ENCODE measurements at regions of chr3 and their contacts with region 1.

Region 1: DNA sequence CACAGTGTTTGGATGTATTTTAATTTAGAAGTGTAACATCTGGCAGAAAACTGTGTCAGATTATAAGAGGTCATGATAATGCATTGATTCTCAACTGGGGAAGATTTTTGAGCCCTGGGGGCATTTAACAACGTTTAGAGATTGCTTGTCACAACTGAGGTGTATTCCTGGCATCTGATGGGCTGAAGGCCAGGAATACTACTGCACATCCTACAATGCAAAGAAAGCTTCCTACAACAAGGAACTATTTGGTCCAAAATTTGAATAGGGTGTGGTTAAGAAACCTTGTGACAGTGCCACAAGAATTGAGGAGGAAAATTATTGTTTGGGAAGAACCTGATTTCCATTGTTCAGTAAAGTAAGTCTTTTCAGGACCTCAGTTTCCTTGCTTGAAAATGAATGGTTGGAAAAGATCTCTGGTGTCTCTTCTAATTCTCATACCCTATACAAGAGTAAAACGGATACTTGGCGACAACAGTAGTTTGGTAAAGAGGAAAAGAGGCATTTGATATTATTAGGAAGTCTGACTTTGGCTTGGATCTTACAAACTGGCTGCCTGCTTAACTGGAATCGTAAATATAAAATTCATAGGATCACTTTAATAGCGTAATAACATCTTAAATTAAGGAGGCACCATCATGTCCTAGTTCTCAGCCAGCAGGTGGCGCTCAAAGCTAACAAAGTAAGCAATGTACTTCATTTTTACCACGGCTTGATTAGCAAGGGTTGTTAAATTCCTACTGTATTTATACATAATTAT is 4.3 kb downstream of the DAZL start:
- DNase-seq: peak; percentile 87
- H3K4me3 ChIP-seq: no peak overlapping the region
- H3K27ac ChIP-seq: no peak overlapping the region
- H3K4me1 ChIP-seq: no peaks in the 10 kb centered on the region
- CTCF ChIP-seq: peak; percentile 99

Region 2: DNA sequence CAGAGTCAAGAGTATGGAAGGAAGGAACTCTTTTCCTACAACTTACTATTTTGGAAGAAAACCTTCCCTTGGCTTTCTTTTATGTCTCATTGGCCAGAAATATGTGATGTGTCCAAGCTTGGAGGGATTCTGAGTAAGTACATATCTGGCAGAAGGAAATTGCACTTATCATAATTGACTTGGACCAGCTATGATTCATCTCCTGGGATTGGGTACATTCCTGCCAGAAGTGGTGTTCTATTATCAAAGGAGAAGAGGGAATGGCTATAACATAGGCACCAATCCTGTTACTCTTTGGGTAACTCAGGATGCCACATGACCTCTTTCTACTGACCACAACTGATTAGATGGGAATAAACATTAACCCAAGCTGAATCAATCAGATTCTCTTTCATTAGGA is 17.8 kb after region 1 on chr3:
- CTCF ChIA-PET with region 1: no interaction called
- POLR2A ChIA-PET with region 1: no interaction called
- intact Hi-C with region 1: no loop called
- DNase-seq: no peak
- H3K4me3 ChIP-seq: no peak overlapping the region
- H3K27ac ChIP-seq: no peak overlapping the region
- H3K4me1 ChIP-seq: no peaks in the 10 kb centered on the region
- CTCF ChIP-seq: no peak

Region 3: DNA sequence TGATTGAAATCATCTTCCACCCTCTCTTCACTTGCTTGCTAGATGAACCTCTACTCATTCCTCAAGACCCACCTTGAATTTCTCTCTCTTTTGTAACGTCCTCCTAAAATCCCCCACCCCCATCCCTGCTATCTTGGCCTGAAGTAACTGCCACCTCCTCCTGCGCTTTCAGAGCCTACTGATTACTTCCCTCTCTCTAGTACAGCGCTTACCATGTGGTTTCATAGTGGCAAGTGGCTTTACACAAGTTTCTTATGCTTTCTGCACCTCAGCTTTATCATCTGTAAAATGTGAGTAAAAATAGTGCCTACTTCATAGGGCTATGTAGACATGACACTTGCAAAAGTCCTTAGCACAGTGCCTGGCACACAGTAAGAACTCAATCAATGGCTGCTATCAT is 33.0 kb after region 1 on chr3:
- CTCF ChIA-PET with region 1: no interaction called
- POLR2A ChIA-PET with region 1: no interaction called
- intact Hi-C with region 1: no loop called
- DNase-seq: no peak
- H3K4me3 ChIP-seq: no peak overlapping the region
- H3K27ac ChIP-seq: no peak overlapping the region
- H3K4me1 ChIP-seq: no peaks in the 10 kb centered on the region
- CTCF ChIP-seq: no peak

Region 4: DNA sequence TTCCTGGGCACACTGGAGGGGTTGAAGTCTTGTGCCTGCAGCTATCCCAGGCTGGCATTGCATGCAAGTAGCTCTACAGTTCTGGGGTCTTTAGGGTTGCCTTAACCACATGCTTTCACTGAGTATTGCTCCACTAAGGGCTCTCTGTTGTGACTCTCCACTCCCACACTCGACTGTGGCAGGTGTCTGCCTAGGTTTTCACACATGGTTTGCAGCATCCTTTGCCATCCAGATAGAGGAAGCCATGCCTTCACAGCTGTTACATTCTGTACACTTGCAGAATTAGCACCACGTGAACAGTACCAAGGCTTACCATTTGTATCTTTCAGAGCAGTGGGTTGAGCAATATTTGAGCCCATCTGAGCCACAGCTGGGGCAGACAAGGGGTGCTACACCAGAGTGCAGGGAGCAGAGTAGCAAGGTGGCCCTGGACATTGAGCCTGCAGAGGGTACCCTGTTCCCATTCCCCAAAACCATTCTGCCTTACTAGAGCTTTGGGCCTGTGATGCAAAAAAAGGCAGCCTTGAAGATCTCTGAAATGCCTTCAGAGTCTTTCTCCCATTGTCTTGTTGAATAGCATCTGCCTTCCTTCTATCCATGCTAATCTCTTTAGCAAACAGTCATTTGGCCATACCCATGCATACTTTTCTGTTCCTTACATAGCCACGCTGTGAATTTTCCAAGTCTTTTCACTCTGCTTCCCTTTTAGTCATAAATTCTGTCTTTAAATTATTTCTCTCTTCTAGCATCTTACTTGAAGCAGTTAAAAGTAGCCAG is 188.6 kb after region 1 on chr3:
- CTCF ChIA-PET with region 1: no interaction called
- POLR2A ChIA-PET with region 1: no interaction called
- intact Hi-C with region 1: no loop called
- DNase-seq: peak; percentile 14
- H3K4me3 ChIP-seq: no peak overlapping the region
- H3K27ac ChIP-seq: no peak overlapping the region
- H3K4me1 ChIP-seq: no peaks in the 10 kb centered on the region
- CTCF ChIP-seq: no peak

Region 5: GRCh38 chr3:16828815-16829214 is 227.9 kb after region 1 on chr3:
- CTCF ChIA-PET with region 1: no interaction called
- POLR2A ChIA-PET with region 1: interaction called, 4 read pairs
- intact Hi-C with region 1: loop called (anchors 2 kb)
- DNase-seq: peak; percentile 77
- H3K4me3 ChIP-seq: no peak overlapping the region
- H3K27ac ChIP-seq: no peak overlapping the region
- H3K4me1 ChIP-seq: peaks cover 14% of the 10 kb centered on the region
- CTCF ChIP-seq: peak; percentile 83

Region 6: DNA sequence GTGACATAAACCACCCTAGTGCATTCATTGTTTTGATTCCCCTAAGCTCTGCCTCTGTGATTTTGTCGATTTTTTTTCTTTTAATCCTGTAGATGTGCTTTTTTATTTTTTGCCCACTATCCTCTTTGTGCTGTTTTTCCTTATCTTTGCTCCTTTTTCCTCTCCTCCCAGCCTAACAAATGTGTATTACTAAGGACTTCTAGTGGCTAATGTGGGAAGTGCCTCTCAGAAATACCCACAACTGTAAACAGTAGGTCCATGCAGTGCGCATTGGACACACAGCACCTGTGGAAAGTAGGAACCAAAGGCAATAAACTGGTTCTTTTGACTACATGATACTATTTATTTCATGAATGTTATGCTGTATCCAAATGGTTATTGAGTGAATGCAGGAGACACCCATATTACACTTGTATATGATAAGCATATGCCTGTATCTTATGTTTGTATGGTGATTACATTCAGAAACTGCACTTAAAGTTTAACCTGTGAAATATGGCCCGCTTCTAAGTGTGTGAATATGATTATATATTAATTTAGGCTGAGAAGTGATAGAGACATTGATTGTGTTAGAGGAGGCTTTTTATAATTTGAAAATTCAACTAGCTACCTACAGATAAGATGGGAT is 431.6 kb after region 1 on chr3:
- CTCF ChIA-PET with region 1: no interaction called
- POLR2A ChIA-PET with region 1: no interaction called
- intact Hi-C with region 1: loop called (anchors 5 kb)
- DNase-seq: peak; percentile 38
- H3K4me3 ChIP-seq: no peak overlapping the region
- H3K27ac ChIP-seq: no peak overlapping the region
- H3K4me1 ChIP-seq: peaks cover 26% of the 10 kb centered on the region
- CTCF ChIP-seq: peak; percentile 85

Region 7: GRCh38 chr3:17233398-17233800 is 632.4 kb after region 1 on chr3:
- CTCF ChIA-PET with region 1: no interaction called
- POLR2A ChIA-PET with region 1: interaction called, 3 read pairs
- intact Hi-C with region 1: loop called (anchors 1 kb)
- DNase-seq: peak; percentile 83
- H3K4me3 ChIP-seq: no peak overlapping the region
- H3K27ac ChIP-seq: no peak overlapping the region
- H3K4me1 ChIP-seq: peaks cover 45% of the 10 kb centered on the region
- CTCF ChIP-seq: peak; percentile 94

Region 8: GRCh38 chr3:17412950-17413530 is 812.1 kb after region 1 on chr3:
- CTCF ChIA-PET with region 1: no interaction called
- POLR2A ChIA-PET with region 1: no interaction called
- intact Hi-C with region 1: loop called (anchors 1 kb)
- DNase-seq: peak; percentile 79
- H3K4me3 ChIP-seq: no peak overlapping the region
- H3K27ac ChIP-seq: no peak overlapping the region
- H3K4me1 ChIP-seq: no peaks in the 10 kb centered on the region
- CTCF ChIP-seq: peak; percentile 92